Activated naive CD4-positive, alpha-beta T cell treated with anti-CD3 and anti-CD28 coated beads for 36 hours (primary cell): ENCODE measurements at regions of chr9 and their contacts with region 1.

Region 1: GRCh38 chr9:99057665-99058625 is 47.0 kb upstream of the TGFBR1 start:
- DNase-seq: peak; percentile 95
- H3K4me3 Mint-ChIP-seq: peak overlapping the region; percentile 53
- H3K27ac Mint-ChIP-seq: peak overlapping the region; percentile 73
- H3K4me1 Mint-ChIP-seq: peaks cover 58% of the 10 kb centered on the region
- H3K27me3 Mint-ChIP-seq: peaks cover 2% of the 10 kb centered on the region

Region 2: DNA sequence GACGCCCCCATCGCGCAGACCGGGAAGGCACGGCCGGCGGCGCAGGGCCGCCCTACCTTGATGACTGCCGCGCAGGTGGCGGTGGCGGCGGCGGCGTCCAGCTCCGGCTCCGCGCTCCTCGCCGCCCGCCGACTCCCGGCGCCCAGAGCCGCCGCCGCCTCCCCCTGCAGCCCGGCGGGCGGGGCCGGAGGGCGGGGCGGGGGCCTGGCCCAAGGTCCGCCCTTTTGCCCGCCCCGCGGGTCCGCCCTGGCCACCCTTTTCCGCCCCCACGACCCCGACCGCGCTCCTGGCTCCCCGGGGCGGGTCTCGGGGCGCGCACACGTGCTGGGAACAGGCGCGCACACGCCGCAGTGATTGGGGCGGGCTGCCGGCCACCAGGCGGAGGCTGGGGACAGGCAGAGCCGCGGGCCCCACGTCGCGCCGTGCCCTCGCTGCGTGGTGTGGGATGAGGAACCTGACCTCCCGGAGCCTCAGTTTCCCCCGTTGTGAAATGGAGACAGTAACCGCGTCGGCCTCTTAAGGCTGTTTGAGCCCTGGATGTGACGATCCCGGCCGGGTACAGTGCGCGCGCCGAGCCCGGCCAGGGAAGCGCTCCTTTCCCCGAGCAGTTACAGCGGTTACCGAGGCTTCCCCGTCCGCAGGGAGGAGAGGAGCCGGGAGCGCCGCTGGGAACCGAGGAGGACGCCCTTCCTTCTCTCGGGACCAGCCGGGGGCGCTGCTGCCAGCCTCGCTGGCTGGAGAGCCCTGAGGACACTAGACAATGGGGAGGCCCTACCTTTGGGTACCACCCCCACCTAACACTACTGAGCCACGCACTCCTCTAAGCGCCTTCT is 865.2 kb before region 1 on chr9 and contains the start of gene CORO2A:
- CTCF ChIA-PET with region 1: no interaction called
- intact Hi-C with region 1: no loop called
- DNase-seq: peak; percentile 64
- H3K4me3 Mint-ChIP-seq: peak within 1 kb of the TSS; percentile 82
- H3K27ac Mint-ChIP-seq: peak within 1 kb of the TSS; percentile 56
- H3K4me1 Mint-ChIP-seq: peaks cover 27% of the 10 kb centered on the region
- H3K27me3 Mint-ChIP-seq: no peaks in the 10 kb centered on the region
- total RNA-seq, gene CORO2A: 8.1 to 8.2 TPM

Region 3: DNA sequence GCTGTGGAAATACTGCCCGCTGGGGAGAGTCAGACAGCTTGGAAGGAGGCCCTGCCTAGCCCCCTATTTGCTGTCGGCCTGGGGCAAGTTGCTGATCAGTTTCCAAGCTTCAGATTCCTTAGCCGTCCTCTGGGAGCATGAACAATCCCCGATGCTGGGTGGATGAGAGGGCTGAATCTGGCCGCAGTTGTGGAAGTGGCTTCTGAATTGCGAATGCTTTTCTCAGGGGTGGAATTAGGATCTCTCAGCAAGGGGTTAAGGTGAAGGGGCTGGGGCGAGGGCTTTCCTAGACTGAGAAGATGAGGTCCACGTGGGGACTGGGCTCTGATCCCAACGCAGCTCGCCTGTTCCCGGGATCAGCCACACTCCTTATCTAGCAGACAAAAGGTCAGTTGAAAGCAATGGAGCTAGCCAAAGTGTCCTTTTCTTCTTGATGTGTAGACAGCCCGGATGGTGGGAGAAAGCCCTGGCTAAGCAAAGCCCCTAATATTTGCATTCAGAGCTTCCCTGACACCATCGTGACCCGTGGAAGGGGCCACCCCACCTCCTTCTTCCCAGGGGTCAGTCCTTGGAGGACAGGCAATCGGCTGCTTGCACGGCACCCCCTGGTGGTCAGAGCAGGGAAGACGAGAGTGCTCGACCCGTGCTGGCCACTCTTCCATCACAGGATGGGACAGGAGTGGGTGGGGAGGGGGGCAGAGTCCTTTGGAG is 59.3 kb before region 1 on chr9:
- CTCF ChIA-PET with region 1: interaction called, 4 read pairs
- intact Hi-C with region 1: loop called (anchors 1 kb)
- DNase-seq: peak; percentile 69
- H3K4me3 Mint-ChIP-seq: no peak overlapping the region
- H3K27ac Mint-ChIP-seq: no peak overlapping the region
- H3K4me1 Mint-ChIP-seq: peaks cover 21% of the 10 kb centered on the region
- H3K27me3 Mint-ChIP-seq: peaks cover 4% of the 10 kb centered on the region

Region 4: GRCh38 chr9:99069075-99069474 is 11.1 kb after region 1 on chr9:
- CTCF ChIA-PET with region 1: no interaction called
- intact Hi-C with region 1: loop called (anchors 1 kb)
- DNase-seq: no peak
- H3K4me3 Mint-ChIP-seq: no peak overlapping the region
- H3K27ac Mint-ChIP-seq: no peak overlapping the region
- H3K4me1 Mint-ChIP-seq: peaks cover 27% of the 10 kb centered on the region
- H3K27me3 Mint-ChIP-seq: no peaks in the 10 kb centered on the region

Region 5: DNA sequence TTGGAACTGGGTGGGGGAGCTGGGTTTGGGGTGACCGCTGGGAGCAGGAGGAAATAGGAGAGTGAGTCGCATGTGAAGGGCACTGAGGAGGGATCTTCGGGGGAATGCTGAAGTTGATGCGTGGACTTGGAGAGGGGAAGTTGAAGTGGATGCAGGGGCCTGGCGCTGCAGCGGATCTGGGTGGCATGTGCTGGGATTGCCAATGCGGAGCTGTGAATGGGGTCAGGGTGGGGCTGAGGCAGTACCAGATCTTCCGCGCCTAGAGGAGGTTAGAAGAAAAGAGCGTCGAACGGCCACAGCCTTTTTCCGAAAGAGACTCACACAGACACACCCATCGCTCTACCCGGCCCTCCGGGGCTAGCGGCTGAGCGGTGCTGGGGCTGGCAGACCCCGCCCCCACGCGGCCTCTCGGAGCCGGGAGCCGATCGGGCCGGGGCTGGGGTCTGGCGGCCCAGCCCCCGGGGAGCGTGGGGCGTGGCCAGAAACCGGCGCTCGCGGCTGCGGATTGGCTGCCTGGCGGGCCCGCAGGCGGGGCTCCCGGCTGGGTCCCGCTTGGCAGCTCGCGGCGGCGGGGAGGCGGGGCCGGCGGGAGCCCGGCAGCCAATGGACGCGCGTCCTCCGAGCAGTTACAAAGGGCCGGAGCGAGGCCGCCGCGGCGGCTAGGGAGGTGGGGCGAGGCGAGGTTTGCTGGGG is 46.7 kb after region 1 on chr9 and contains the start of gene TGFBR1:
- CTCF ChIA-PET with region 1: interaction called, 12 read pairs
- intact Hi-C with region 1: loop called (anchors 1 kb)
- DNase-seq: peak; percentile 89
- H3K4me3 Mint-ChIP-seq: peak within 1 kb of the TSS; percentile 89
- H3K27ac Mint-ChIP-seq: peak within 1 kb of the TSS; percentile 80
- H3K4me1 Mint-ChIP-seq: peaks cover 45% of the 10 kb centered on the region
- H3K27me3 Mint-ChIP-seq: no peaks in the 10 kb centered on the region
- total RNA-seq, gene TGFBR1: 13.7 to 16.9 TPM

Region 6: GRCh38 chr9:99118782-99119466 is 61.0 kb after region 1 on chr9:
- CTCF ChIA-PET with region 1: interaction called, 4 read pairs
- intact Hi-C with region 1: loop called (anchors 1 kb)
- DNase-seq: peak; percentile 80
- H3K4me3 Mint-ChIP-seq: peak overlapping the region; percentile 70
- H3K27ac Mint-ChIP-seq: peak overlapping the region; percentile 90
- H3K4me1 Mint-ChIP-seq: peaks cover 85% of the 10 kb centered on the region
- H3K27me3 Mint-ChIP-seq: no peaks in the 10 kb centered on the region

Region 7: GRCh38 chr9:99253772-99254431 is 196.0 kb after region 1 on chr9:
- CTCF ChIA-PET with region 1: no interaction called
- intact Hi-C with region 1: loop called (anchors 2 kb)
- DNase-seq: peak; percentile 96
- H3K4me3 Mint-ChIP-seq: peak overlapping the region; percentile 44
- H3K27ac Mint-ChIP-seq: peak overlapping the region; percentile 84
- H3K4me1 Mint-ChIP-seq: peaks cover 34% of the 10 kb centered on the region
- H3K27me3 Mint-ChIP-seq: peaks cover 18% of the 10 kb centered on the region

Region 8: GRCh38 chr9:100084734-100085133 is 1026.8 kb after region 1 on chr9:
- CTCF ChIA-PET with region 1: no interaction called
- intact Hi-C with region 1: loop called (anchors 2 kb)
- DNase-seq: no peak
- H3K4me3 Mint-ChIP-seq: no peak overlapping the region
- H3K27ac Mint-ChIP-seq: no peak overlapping the region
- H3K4me1 Mint-ChIP-seq: peaks cover 73% of the 10 kb centered on the region
- H3K27me3 Mint-ChIP-seq: no peaks in the 10 kb centered on the region